Right ventricle myocardium inferior (tissue), 1 donor: ENCODE measurements at regions of chr18 and their contacts with region 1.

Region 1: DNA sequence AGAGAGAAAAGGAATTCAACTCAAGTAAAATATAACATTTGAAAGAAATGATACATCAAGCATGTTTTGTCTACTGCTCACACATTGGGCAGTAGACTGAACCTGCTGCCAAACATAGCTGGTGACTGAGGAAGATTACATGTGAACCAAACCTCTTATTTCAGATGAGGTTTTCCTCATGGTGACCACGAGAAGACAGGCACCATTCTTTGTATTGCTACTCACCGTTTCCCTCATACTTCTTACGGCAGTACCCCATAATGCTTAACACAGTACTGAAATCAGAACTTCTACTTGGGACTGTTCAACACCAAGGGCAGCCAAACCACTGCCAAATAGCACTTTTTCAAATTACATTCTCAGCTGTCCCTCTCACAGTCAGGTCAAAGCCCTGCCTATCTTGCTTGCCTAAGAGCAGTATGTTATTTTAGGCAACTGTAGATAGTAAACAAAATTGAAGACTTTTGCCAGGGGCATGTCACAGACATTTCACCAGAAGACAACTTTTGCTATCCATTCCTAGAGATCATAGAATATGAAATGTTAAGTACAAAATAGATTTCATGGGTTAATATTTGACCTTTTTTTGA is 167.1 kb upstream of the DOK6 start:
- DNase-seq: no peak
- ATAC-seq: peak; percentile 78

Region 2: GRCh38 chr18:69143084-69143483 is 90.5 kb before region 1 on chr18:
- intact Hi-C with region 1: loop called (anchors 5 kb)
- DNase-seq: no peak
- ATAC-seq: no peak

Region 3: DNA sequence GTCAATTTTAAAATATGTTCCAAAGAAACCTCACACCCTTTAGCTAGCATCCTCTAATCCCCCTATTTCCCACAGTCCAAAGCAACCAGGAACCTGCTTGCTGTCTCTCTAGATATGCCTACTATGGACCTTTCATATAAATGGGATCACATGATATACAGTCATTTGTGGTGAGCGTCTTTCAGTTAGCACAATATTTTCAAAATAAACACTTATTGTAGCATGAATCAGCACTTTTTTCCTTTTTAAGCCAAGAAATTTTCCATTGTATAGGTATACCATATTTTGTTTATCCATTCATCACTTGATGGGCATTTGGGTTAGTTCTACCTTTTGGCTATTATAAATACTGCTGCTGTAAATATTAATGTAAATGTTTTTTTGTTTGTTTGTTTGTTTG is 55.9 kb before region 1 on chr18:
- intact Hi-C with region 1: no loop called
- DNase-seq: no peak
- ATAC-seq: no peak

Region 4: DNA sequence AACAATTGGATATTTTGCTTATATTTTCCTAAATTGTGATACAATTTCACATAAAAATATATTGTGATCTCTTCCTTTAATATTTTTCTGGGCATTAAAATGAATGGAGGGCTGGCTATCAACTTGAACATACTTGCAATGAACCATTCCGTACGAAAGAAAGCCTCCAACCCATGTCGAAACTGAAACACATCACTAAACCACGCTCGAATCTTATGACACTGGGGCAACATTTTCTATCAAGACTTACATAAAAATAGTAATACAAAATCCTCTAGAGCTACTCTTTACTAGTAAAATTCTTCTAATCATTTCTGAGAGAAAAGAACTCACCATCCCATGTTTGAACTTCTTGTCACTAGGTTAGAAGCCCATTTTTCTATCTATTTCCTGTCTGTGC is 34.3 kb after region 1 on chr18:
- intact Hi-C with region 1: no loop called
- DNase-seq: no peak
- ATAC-seq: no peak

Region 5: GRCh38 chr18:69282371-69282770 is 48.8 kb after region 1 on chr18:
- intact Hi-C with region 1: no loop called
- DNase-seq: no peak
- ATAC-seq: no peak